GM12878 (cell line): ENCODE measurements at regions of chr2 and their contacts with region 1.

Region 1: GRCh38 chr2:216034065-216034464 is 20.7 kb upstream of the MREG start:
- DNase-seq: peak; percentile 67
- ATAC-seq: peak; percentile 65
- H3K4me3 ChIP-seq: no peak overlapping the region
- H3K27ac ChIP-seq: peak overlapping the region; percentile 83
- H3K4me1 ChIP-seq: peaks cover 32% of the 10 kb centered on the region
- H3K27me3 ChIP-seq: no peaks in the 10 kb centered on the region
- CTCF ChIP-seq: peak; percentile 77 to 94 (median 84)
- EP300 ChIP-seq: no peak
- POLR2A ChIP-seq: no peak
- RAD21 ChIP-seq: peak; percentile 75

Region 2: GRCh38 chr2:215811409-215812345 is 222.4 kb before region 1 on chr2:
- CTCF ChIA-PET with region 1: no interaction called
- POLR2A ChIA-PET with region 1: no interaction called
- RAD21 ChIA-PET with region 1: no interaction called
- SMC1A ChIA-PET with region 1: no interaction called
- in situ Hi-C with region 1: no loop called
- intact Hi-C with region 1: no loop called
- DNase-seq: peak; percentile 90
- ATAC-seq: peak; percentile 98
- H3K4me3 ChIP-seq: peak overlapping the region; percentile 30; the same call in 1 of the 2 replicates
- H3K27ac ChIP-seq: peak overlapping the region; percentile 45
- H3K4me1 ChIP-seq: peaks cover 19% of the 10 kb centered on the region
- H3K27me3 ChIP-seq: no peaks in the 10 kb centered on the region
- CTCF ChIP-seq: no peak
- EP300 ChIP-seq: peak in 1 of 2 experiments; percentile 87; a peak in 2 of 4 replicates
- POLR2A ChIP-seq: no peak
- RAD21 ChIP-seq: no peak

Region 3: DNA sequence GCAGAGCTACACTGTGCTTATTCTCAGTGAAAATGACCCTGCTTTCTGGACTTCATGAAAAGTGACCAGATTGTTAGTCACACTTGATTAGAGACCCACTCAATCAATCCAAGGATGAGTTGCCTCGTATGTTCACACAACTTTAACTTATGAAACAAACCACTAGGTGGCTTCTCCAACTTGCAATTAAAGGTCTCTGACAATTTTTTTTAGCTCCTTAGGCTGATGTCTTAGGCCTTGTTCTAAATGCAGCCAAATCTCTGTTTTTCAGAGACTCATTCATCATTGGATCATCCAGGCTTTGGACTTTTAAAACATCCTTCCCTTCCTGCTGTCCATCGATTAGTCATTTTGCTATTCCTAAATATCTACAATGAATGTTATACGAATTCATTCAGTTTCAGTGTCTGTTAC is 84.1 kb before region 1 on chr2:
- CTCF ChIA-PET with region 1: interaction called, 17 read pairs
- POLR2A ChIA-PET with region 1: no interaction called
- RAD21 ChIA-PET with region 1: interaction called, 6 read pairs
- SMC1A ChIA-PET with region 1: interaction called, 26 read pairs
- in situ Hi-C with region 1: no loop called
- intact Hi-C with region 1: no loop called
- DNase-seq: peak; percentile 30
- ATAC-seq: peak; percentile 97
- H3K4me3 ChIP-seq: no peak overlapping the region
- H3K27ac ChIP-seq: no peak overlapping the region
- H3K4me1 ChIP-seq: no peaks in the 10 kb centered on the region
- H3K27me3 ChIP-seq: no peaks in the 10 kb centered on the region
- CTCF ChIP-seq: peak; percentile 46 to 63 (median 62)
- EP300 ChIP-seq: no peak
- POLR2A ChIP-seq: no peak
- RAD21 ChIP-seq: peak; percentile 89

Region 4: GRCh38 chr2:216023055-216023648 is 10.9 kb before region 1 on chr2:
- CTCF ChIA-PET with region 1: interaction called, 88 read pairs
- POLR2A ChIA-PET with region 1: interaction called, 6 read pairs
- RAD21 ChIA-PET with region 1: interaction called, 39 read pairs
- SMC1A ChIA-PET with region 1: interaction called, 64 read pairs
- in situ Hi-C with region 1: no loop called
- intact Hi-C with region 1: no loop called
- DNase-seq: no peak
- ATAC-seq: peak; percentile 97
- H3K4me3 ChIP-seq: no peak overlapping the region
- H3K27ac ChIP-seq: no peak overlapping the region
- H3K4me1 ChIP-seq: no peaks in the 10 kb centered on the region
- H3K27me3 ChIP-seq: no peaks in the 10 kb centered on the region
- CTCF ChIP-seq: peak; percentile 70 to 73 (median 71)
- EP300 ChIP-seq: no peak
- POLR2A ChIP-seq: no peak
- RAD21 ChIP-seq: peak; percentile 89

Region 5: DNA sequence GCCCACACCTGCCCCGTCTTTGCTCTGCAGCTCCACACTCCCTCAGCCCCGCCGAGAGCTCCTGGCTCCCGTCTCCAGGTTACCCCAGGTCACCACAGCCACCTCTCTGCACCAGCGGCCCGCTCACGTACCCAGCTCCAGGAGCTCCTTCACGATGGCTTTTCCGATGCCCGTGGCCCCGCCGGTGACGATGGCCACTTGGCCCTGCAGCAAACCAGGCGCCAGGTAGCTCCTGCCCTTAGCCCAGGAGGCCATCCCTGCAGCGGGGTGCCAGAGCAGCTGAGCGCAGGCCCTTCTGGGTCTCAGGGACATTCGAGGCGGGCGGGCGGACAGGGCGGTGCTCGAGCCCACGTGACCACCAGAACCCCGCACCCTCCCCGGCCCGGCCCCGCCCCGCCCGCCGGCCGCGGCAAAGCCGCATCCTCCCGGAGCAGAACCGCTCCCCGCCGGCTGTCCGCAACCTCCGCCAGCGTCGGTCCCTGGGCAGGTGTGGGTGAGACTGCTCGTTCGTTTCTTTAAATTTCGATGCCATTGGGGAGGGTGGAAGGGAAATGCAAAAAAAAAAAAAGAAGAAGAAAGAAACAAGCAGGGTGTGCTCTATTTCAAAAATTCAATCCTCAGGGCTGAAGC is 47.5 kb after region 1 on chr2 and contains the starts of genes PECR and TMEM169:
- CTCF ChIA-PET with region 1: interaction called, 15 read pairs
- POLR2A ChIA-PET with region 1: interaction called, 10 read pairs
- RAD21 ChIA-PET with region 1: interaction called, 9 read pairs
- SMC1A ChIA-PET with region 1: interaction called, 9 read pairs
- in situ Hi-C with region 1: no loop called
- intact Hi-C with region 1: no loop called
- DNase-seq: no peak
- ATAC-seq: peak; percentile 97
- H3K4me3 ChIP-seq: peak within 1 kb of the TSS; percentile 84
- H3K27ac ChIP-seq: peak within 1 kb of the TSS; percentile 58
- H3K4me1 ChIP-seq: peaks cover 6% of the 10 kb centered on the region; the same call in 1 of the 2 replicates
- H3K27me3 ChIP-seq: no peaks in the 10 kb centered on the region
- CTCF ChIP-seq: no peak
- EP300 ChIP-seq: no peak
- POLR2A ChIP-seq: peak; percentile 94
- RAD21 ChIP-seq: no peak
- polyA plus RNA-seq, gene PECR: 7.6 to 10.4 TPM
- polyA plus RNA-seq, gene TMEM169: 0.57 to 1.2 TPM

Region 6: DNA sequence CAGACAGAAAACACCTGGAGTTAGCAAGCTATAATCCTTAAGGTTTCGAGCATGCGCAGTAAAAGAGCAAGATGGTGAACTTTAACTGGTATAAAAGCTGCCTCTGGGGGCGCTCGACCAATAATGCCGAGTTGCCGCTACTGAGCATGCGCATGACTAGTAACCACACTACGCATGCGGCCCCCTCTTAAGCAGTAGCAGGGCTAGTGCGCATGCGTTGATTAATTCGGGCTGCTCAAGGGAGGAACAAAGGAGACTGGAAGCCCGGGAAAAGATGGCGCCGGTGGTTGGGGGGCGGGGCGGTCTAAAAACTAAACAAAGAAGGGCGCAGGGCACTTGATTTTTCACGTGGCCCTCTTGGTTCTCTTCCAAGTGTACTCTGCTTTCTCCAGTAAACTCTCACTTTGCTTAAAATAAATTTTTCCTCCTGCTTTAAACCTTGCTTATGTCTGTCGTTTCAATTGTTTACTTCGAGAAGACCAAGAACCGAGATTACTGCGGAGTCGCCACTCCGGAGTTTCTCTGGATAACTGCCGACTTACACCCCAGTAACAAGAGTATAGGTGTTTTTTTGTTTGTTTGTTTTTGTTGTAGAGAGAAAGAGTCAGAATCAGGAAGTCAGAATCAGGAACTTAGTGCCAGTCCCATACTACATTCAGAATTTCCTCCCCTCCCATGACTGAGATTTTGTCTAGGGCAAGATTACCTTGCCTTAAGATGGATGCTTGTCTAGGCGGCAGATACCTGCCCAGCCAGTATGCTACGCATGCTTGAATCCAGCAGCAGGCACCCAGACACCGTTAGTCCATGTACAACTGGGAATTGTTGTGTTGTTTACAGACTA is 80.9 kb after region 1 on chr2:
- CTCF ChIA-PET with region 1: interaction called, 105 read pairs
- POLR2A ChIA-PET with region 1: interaction called, 23 read pairs
- RAD21 ChIA-PET with region 1: interaction called, 15 read pairs
- SMC1A ChIA-PET with region 1: interaction called, 43 read pairs
- in situ Hi-C with region 1: no loop called
- intact Hi-C with region 1: loop called (anchors 1 kb)
- DNase-seq: peak; percentile 94
- ATAC-seq: peak; percentile 71
- H3K4me3 ChIP-seq: peak overlapping the region; percentile 93
- H3K27ac ChIP-seq: peak overlapping the region; percentile 99
- H3K4me1 ChIP-seq: peaks cover 29% of the 10 kb centered on the region
- H3K27me3 ChIP-seq: no peaks in the 10 kb centered on the region
- CTCF ChIP-seq: peak; percentile 79 to 97 (median 93)
- EP300 ChIP-seq: no peak
- POLR2A ChIP-seq: peak; percentile 67
- RAD21 ChIP-seq: no peak

Region 7: GRCh38 chr2:216498418-216499413 is 464.7 kb after region 1 on chr2 and contains the start of gene RPL37A:
- CTCF ChIA-PET with region 1: no interaction called
- POLR2A ChIA-PET with region 1: no interaction called
- RAD21 ChIA-PET with region 1: no interaction called
- SMC1A ChIA-PET with region 1: no interaction called
- in situ Hi-C with region 1: no loop called
- intact Hi-C with region 1: loop called (anchors 10 kb)
- DNase-seq: peak; percentile 87
- ATAC-seq: peak; percentile 84
- H3K4me3 ChIP-seq: peak within 1 kb of the TSS; percentile 94
- H3K27ac ChIP-seq: peak within 1 kb of the TSS; percentile 88
- H3K4me1 ChIP-seq: peaks cover 23% of the 10 kb centered on the region
- H3K27me3 ChIP-seq: no peaks in the 10 kb centered on the region
- CTCF ChIP-seq: no peak
- EP300 ChIP-seq: no peak
- POLR2A ChIP-seq: peak; percentile 100
- RAD21 ChIP-seq: no peak
- polyA plus RNA-seq, gene RPL37A: 4,917 to 6,297 TPM